Gastrocnemius medialis (tissue), 4 donors: ENCODE measurements at regions of chr10 and their contacts with region 1.

Region 1: DNA sequence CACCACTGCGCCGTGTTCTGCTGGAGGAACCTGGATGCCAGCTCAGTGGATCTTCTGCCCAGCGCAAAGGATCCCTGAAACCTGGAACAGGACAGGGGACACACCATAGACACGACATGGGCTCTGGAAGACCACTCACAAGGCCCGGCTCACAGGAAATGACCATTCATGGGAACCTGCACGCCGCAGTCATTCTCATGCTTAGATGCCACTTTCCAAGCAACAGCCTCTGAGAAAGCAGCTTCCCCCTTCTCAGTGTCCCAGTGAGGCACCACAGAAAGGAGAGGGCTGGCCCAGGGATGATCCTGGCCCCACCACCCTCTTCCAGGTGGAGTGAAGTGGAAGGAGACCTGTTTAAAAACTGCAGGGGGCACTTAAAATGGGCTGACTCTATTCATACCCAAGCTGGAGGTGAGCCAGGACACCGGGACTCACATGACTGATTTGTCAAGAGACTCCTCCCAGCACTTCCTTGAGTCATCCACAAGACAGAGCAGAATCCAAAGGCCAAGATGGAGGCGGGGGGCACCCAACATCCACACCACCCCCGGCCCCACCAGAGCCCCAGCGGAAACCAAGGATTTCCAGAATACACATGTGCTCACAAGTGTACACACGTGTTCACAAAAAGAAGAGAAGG is 11.2 kb downstream of the CTBP2 start:
- DNase-seq: peak; percentile 77 to 92
- ATAC-seq: peak; percentile 75 to 77
- H3K4me3 ChIP-seq: no peak overlapping the region
- H3K27ac ChIP-seq: peak overlapping the region; percentile 88 to 99 (median 97)
- H3K4me1 ChIP-seq: peaks cover 81 to 91% of the 10 kb centered on the region in 2 donors
- H3K27me3 ChIP-seq: no peaks in the 10 kb centered on the region
- CTCF ChIP-seq: no peak
- POLR2A ChIP-seq: peak in 1 of 2 donors; percentile 24

Region 2: DNA sequence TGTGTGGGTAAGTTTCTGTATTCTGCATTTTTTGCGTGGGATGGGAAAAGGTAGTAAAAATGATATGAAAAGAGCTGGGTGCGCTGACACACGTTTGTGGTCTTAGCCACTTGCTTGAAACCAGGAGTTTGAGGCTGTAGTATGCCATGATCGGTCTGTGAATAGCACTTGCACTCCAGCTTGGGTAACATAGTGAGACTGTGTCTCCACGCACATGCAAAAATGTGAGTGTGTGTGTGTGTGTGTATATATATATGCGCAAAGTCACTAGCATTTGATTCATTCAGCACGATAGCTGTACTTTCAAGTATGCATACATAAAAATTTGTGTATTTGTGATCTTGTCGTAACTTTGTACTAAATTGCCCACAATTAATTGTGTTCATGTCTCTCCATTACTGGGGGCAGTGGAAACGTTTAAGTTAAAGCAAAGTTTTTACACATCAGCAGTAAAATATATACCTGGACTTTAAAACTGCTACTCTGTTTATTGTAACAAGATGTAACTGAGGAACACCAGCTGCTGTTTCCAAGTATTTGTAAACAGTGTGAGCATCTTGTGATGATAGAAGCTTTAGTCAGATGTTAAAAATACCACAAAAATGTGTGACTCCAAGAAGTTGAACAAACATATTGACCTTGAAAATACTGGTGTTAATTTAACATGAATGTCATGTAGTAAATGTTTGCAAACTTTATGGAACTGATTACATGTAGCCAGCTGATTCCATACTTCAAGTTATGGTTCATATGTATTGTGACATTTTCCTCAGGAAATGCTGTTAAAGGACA is 205.7 kb before region 1 on chr10:
- in situ Hi-C with region 1: no loop called
- intact Hi-C with region 1: loop called (anchors 5 kb)
- DNase-seq: no peak
- ATAC-seq: peak; percentile 84 to 90
- H3K4me3 ChIP-seq: peak overlapping the region; percentile 1 to 46 (median 15)
- H3K27ac ChIP-seq: peak overlapping the region; percentile 85 to 90 (median 87)
- H3K4me1 ChIP-seq: peaks cover 92 to 96% of the 10 kb centered on the region in 2 donors
- H3K27me3 ChIP-seq: no peaks in the 10 kb centered on the region
- CTCF ChIP-seq: no peak
- POLR2A ChIP-seq: peak in 1 of 2 donors; percentile 63

Region 3: DNA sequence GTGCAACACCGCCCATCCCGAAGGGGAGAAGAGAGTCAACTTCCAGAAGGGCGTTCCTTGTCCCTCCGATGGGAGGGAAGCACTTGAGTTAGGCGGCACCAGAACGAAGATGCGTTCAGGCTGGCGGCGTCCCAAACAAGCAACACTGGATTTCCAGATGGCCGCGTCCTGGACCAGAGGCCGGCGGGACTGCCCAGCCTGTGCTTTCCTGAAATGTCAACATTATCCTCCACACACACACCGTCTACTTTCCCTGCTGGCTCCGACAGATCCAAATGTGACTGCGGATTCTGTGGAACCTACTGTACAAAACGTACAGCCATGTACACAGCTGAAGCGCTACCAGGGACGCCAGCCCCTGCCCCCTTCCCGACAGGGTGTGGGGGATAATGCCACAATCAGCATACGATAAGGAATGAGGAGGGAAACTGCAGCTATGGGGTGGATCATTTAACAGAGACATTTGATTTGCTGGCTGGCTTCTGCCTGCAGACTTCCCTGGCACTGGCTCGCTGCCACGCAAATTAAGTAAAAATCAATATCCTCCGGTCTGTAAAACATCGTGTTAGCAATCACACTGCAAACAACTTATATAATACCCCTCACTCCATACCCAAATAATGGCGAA is 125.2 kb before region 1 on chr10:
- in situ Hi-C with region 1: no loop called
- intact Hi-C with region 1: no loop called
- DNase-seq: peak; percentile 65 to 77
- ATAC-seq: peak; percentile 28 to 59
- H3K4me3 ChIP-seq: peak overlapping the region in 3 of 4 donors; percentile 14 to 34 (median 14)
- H3K27ac ChIP-seq: peak overlapping the region; percentile 52 to 80 (median 72)
- H3K4me1 ChIP-seq: peaks cover 70 to 81% of the 10 kb centered on the region in 2 donors
- H3K27me3 ChIP-seq: no peaks in the 10 kb centered on the region
- CTCF ChIP-seq: no peak
- POLR2A ChIP-seq: no peak

Region 4: GRCh38 chr10:125048101-125048864 is 100.9 kb before region 1 on chr10:
- in situ Hi-C with region 1: loop called in 3 of 4 experiments (anchors 10 kb)
- intact Hi-C with region 1: loop called (anchors 2 kb)
- DNase-seq: peak; percentile 69 to 82
- ATAC-seq: peak; percentile 63 to 79
- H3K4me3 ChIP-seq: peak overlapping the region in 1 of 4 donors; percentile 2
- H3K27ac ChIP-seq: peak overlapping the region; percentile 15 to 69 (median 24)
- H3K4me1 ChIP-seq: peaks cover 71 to 91% of the 10 kb centered on the region in 2 donors
- H3K27me3 ChIP-seq: no peaks in the 10 kb centered on the region
- CTCF ChIP-seq: peak; percentile 95 to 98 (median 98)
- POLR2A ChIP-seq: no peak

Region 5: GRCh38 chr10:125084191-125084613 is 65.0 kb before region 1 on chr10:
- in situ Hi-C with region 1: loop called in 1 of 4 experiments (anchors 10 kb)
- intact Hi-C with region 1: loop called (anchors 2 kb)
- DNase-seq: peak; percentile 75 to 88
- ATAC-seq: peak; percentile 67 to 74
- H3K4me3 ChIP-seq: peak overlapping the region in 1 of 4 donors; percentile 5
- H3K27ac ChIP-seq: peak overlapping the region; percentile 86 to 91 (median 89)
- H3K4me1 ChIP-seq: peaks cover 79 to 85% of the 10 kb centered on the region in 2 donors
- H3K27me3 ChIP-seq: no peaks in the 10 kb centered on the region
- CTCF ChIP-seq: peak in 4 of 5 experiments; percentile 4 to 33 (median 20)
- POLR2A ChIP-seq: peak in 1 of 2 donors; percentile 15